Ovary (tissue), 10 donors: ENCODE measurements at regions of chr11 and their contacts with region 1.

Region 1: DNA sequence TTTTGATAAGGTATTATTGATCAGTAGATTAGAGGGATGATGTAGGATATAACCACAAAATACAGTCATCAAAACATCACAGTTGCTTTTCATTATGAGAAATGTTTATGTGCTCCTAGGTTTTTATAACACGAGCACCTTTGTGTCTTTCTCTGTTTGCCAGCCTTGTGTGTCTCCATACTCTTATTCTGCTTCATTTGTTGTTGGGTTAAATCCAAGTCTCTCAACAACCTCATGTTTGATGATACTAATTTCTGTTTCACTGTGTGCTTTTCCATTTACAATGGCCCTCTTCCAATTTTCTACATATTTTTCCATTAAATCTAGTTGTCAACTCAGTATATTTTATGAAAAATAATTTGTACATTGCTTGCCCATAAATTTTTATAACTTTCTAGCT is 107.7 kb upstream of the POU2AF2 start:
- DNase-seq: no peak
- H3K4me3 ChIP-seq: no peak overlapping the region
- H3K27ac ChIP-seq: no peak overlapping the region
- H3K4me1 ChIP-seq: no peaks in the 10 kb centered on the region
- H3K27me3 ChIP-seq: no peaks in the 10 kb centered on the region
- CTCF ChIP-seq: no peak
- EP300 ChIP-seq: no peak
- POLR2A ChIP-seq: no peak

Region 2: GRCh38 chr11:110486156-110486555 is 651.7 kb before region 1 on chr11:
- intact Hi-C with region 1: loop called in 1 of 4 experiments (anchors 5 kb)
- DNase-seq: no peak
- H3K4me3 ChIP-seq: no peak overlapping the region
- H3K27ac ChIP-seq: no peak overlapping the region
- H3K4me1 ChIP-seq: no peaks in the 10 kb centered on the region
- H3K27me3 ChIP-seq: no peaks in the 10 kb centered on the region
- CTCF ChIP-seq: no peak
- EP300 ChIP-seq: no peak
- POLR2A ChIP-seq: no peak

Region 3: GRCh38 chr11:110525883-110526282 is 612.0 kb before region 1 on chr11:
- intact Hi-C with region 1: loop called in 1 of 4 experiments (anchors 10 kb)
- DNase-seq: peak in 1 of 5 donors; percentile 54
- H3K4me3 ChIP-seq: no peak overlapping the region
- H3K27ac ChIP-seq: no peak overlapping the region
- H3K4me1 ChIP-seq: peaks cover under 1% of the 10 kb centered on the region
- H3K27me3 ChIP-seq: no peaks in the 10 kb centered on the region
- CTCF ChIP-seq: no peak
- EP300 ChIP-seq: no peak
- POLR2A ChIP-seq: no peak

Region 4: DNA sequence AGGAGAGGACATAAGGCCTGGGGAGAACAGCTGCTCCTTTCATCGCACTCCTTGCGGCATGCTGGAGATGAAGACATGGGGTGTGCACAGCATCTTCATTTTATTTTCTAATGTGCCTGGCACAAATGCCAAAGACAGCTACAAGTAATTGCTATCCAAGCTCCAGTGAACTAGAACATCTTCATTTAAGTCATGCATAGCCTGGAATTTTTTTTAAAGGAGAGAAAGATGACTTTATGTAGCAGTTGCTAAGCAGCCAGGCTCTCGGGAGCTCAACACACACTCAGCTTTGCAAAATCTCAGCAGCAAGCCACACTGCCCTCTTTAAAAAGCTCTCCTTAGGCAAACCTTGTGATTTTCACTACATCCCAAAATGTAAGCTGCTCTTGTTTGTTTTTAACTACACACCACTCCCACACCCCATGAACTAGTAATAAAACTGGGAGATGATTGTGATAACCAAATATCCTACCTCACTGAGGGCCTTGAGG is 56.8 kb before region 1 on chr11:
- intact Hi-C with region 1: no loop called
- DNase-seq: no peak
- H3K4me3 ChIP-seq: no peak overlapping the region
- H3K27ac ChIP-seq: no peak overlapping the region
- H3K4me1 ChIP-seq: no peaks in the 10 kb centered on the region
- H3K27me3 ChIP-seq: no peaks in the 10 kb centered on the region
- CTCF ChIP-seq: no peak
- EP300 ChIP-seq: no peak
- POLR2A ChIP-seq: no peak

Region 5: DNA sequence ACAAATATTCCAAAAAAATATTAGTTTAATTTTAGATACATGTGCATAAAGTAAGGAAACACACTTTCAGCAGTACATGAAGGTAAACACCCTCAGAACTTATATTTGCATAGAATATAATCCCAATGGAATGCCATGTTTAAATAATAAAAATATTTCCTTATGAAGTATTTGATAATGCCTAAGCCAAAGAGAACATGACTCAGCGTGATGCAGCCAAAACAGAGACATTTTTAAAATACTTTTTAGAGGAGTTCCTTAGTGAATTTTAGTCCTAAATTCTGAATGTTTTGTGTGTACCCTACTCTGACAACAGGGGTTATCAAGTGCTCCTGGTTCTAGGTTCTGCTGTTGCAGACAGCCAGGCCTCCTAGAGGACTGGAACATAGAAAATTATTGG is 68.6 kb after region 1 on chr11:
- intact Hi-C with region 1: no loop called
- DNase-seq: no peak
- H3K4me3 ChIP-seq: no peak overlapping the region
- H3K27ac ChIP-seq: no peak overlapping the region
- H3K4me1 ChIP-seq: no peaks in the 10 kb centered on the region
- H3K27me3 ChIP-seq: no peaks in the 10 kb centered on the region
- CTCF ChIP-seq: no peak
- EP300 ChIP-seq: no peak
- POLR2A ChIP-seq: no peak

Region 6: DNA sequence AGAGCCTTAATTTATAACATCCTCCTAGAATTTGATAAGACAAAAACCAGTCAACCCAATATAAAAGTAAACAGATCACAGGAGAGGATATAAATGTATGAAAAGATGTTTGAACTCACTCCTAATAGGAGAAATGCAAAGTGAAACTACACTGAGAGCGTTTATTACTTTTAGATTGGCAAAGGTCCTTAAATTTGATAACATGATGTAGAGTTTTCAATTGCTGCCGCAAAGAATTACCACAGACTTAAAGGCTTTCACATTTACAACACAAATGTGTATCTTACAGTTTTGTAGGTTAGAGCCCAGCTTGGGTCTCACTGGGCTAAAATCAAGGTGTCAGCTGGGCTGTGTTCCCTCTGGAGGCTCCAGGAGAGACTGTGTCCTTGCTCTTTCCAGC is 98.5 kb after region 1 on chr11:
- intact Hi-C with region 1: no loop called
- DNase-seq: no peak
- H3K4me3 ChIP-seq: no peak overlapping the region
- H3K27ac ChIP-seq: no peak overlapping the region
- H3K4me1 ChIP-seq: no peaks in the 10 kb centered on the region
- H3K27me3 ChIP-seq: no peaks in the 10 kb centered on the region
- CTCF ChIP-seq: no peak
- EP300 ChIP-seq: no peak
- POLR2A ChIP-seq: no peak

Region 7: DNA sequence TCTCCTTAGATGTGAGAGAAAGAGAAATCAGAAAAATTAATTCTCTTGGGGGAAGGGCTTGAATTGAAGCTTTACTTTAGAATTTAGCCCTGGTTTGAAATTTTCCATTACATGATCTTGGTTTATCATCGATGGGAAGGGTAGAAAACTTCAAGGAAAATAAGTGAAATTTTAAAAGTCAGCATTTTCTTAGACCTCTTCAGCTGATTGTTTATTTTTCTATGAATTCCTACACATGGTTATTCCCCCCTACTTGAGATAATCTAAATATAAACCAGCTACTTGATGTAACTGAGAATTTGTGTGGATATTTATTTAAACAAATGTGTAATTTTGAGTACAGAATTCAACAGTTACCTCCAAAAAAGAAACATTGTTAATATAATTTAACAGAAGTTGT is 925.1 kb after region 1 on chr11:
- intact Hi-C with region 1: no loop called
- DNase-seq: no peak
- H3K4me3 ChIP-seq: no peak overlapping the region
- H3K27ac ChIP-seq: no peak overlapping the region
- H3K4me1 ChIP-seq: no peaks in the 10 kb centered on the region
- H3K27me3 ChIP-seq: no peaks in the 10 kb centered on the region
- CTCF ChIP-seq: no peak
- EP300 ChIP-seq: no peak
- POLR2A ChIP-seq: no peak